Activated T-helper 1 cell treated with anti-CD3 and anti-CD28 coated beads, Interleukin-12 subunit alpha, Interleukin-12 subunit beta, Interleukin-2, Interleukin-4 antibody, amounts not matched to agents 30 ng/mL and 10 ng/mL and 1 ng/mL, durations not matched to agents 14 hours and 24 hours and 36 hours (primary cell): ENCODE measurements at regions of chr20 and their contacts with region 1.

Region 1: GRCh38 chr20:833450-834150 is at the start of gene FAM110A:
- DNase-seq: peak; percentile 95
- H3K4me3 Mint-ChIP-seq: peak within 1 kb of the TSS; percentile 81
- H3K27ac Mint-ChIP-seq: peak within 1 kb of the TSS; percentile 86
- H3K4me1 Mint-ChIP-seq: peaks cover 51% of the 10 kb centered on the region
- H3K27me3 Mint-ChIP-seq: peaks cover 2% of the 10 kb centered on the region
- total RNA-seq, gene FAM110A: 19.0 and 21.1 TPM in 2 replicates

Region 2: DNA sequence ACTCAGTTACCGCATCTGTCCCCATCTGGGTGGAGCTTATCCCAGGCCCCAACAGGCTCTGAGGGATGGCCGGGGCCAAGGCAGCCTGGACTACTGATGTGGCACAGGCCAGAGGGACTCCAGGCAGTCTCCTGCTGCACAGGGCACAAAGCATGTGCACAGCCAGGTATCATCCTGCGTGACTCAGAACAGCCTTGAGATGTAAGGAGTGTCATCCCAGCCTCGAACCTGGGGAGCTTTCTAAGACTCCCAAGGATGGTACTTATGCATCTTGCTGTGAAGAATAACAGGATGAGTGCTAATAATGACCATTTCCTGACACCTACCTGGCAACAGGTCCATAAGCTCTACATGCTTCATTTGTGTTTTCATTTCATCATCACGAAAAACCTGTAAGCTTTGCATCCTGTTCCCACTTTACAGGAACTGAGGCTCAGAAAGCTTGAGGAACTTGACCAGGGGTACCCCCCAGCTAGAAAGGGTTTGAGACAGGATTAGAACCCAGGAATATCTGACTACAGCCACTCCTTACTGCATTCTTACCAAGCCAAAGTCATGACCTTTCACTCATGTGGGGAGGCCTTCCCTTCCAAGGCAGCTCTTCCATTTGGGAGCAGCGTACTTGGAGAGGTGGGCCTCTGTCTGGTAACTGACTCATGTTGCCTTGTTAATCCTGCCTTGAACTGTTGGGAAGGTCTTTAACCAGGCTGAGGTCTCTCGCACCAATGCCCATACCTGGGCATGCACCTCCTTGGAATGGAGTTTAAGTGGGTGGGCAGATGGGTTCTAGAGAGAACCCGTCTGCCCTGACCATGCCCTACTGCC is 451.1 kb before region 1 on chr20:
- intact Hi-C with region 1: no loop called
- DNase-seq: no peak
- H3K4me3 Mint-ChIP-seq: peak overlapping the region; percentile 81
- H3K27ac Mint-ChIP-seq: peak overlapping the region; percentile 68
- H3K4me1 Mint-ChIP-seq: peaks cover 22% of the 10 kb centered on the region
- H3K27me3 Mint-ChIP-seq: peaks cover 3% of the 10 kb centered on the region

Region 3: GRCh38 chr20:462199-462991 is 371.2 kb before region 1 on chr20 and contains the start of gene TBC1D20:
- intact Hi-C with region 1: loop called (anchors 5 kb)
- DNase-seq: peak; percentile 84
- H3K4me3 Mint-ChIP-seq: peak within 1 kb of the TSS; percentile 98
- H3K27ac Mint-ChIP-seq: peak within 1 kb of the TSS; percentile 94
- H3K4me1 Mint-ChIP-seq: peaks cover 44% of the 10 kb centered on the region
- H3K27me3 Mint-ChIP-seq: peaks cover 2% of the 10 kb centered on the region
- total RNA-seq, gene TBC1D20: 37.5 and 41.4 TPM in 2 replicates

Region 4: GRCh38 chr20:653110-653589 is 180.4 kb before region 1 on chr20 and contains the start of gene SRXN1:
- intact Hi-C with region 1: loop called (anchors 2 kb)
- DNase-seq: peak; percentile 80
- H3K4me3 Mint-ChIP-seq: peak within 1 kb of the TSS; percentile 87
- H3K27ac Mint-ChIP-seq: peak within 1 kb of the TSS; percentile 81
- H3K4me1 Mint-ChIP-seq: peaks cover 35% of the 10 kb centered on the region
- H3K27me3 Mint-ChIP-seq: peaks cover 16% of the 10 kb centered on the region
- total RNA-seq, gene SRXN1: 28.8 and 30.2 TPM in 2 replicates

Region 5: DNA sequence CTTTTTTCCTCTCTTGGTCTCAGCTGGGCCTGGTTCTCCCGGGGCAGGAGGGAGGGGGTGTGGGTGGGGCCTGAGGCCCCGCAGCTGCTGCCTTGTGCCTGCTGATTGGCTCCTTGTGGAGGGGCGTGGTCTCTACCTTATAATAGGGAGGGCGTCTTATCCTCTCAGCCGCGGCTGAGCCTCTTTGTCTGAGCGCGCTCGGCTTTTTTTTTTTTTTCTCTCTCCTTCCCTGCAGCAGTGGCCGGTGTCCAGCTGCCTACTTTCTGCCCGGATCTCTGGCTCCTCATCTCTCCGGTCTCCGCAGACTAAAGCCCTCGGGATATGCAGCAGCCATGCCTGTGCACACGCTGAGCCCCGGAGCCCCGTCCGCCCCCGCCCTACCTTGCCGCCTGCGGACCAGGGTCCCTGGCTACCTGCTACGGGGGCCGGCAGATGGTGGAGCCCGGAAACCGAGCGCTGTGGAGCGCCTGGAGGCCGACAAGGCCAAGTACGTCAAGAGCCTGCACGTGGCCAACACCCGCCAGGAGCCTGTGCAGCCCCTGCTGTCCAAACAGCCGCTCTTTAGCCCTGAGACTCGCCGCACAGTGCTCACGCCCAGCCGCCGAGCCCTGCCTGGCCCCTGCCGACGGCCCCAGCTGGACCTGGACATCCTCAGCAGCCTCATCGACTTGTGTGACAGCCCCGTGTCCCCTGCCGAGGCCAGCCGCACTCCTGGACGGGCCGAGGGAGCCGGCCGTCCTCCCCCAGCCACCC is 11.0 kb after region 1 on chr20:
- intact Hi-C with region 1: loop called (anchors 1 kb)
- DNase-seq: peak; percentile 78
- H3K4me3 Mint-ChIP-seq: peak overlapping the region; percentile 86
- H3K27ac Mint-ChIP-seq: peak overlapping the region; percentile 70
- H3K4me1 Mint-ChIP-seq: peaks cover 48% of the 10 kb centered on the region
- H3K27me3 Mint-ChIP-seq: no peaks in the 10 kb centered on the region

Region 6: GRCh38 chr20:1150218-1150617 is 316.6 kb after region 1 on chr20:
- intact Hi-C with region 1: no loop called
- DNase-seq: no peak
- H3K4me3 Mint-ChIP-seq: no peak overlapping the region
- H3K27ac Mint-ChIP-seq: no peak overlapping the region
- H3K4me1 Mint-ChIP-seq: peaks cover 27% of the 10 kb centered on the region
- H3K27me3 Mint-ChIP-seq: no peaks in the 10 kb centered on the region

Region 7: GRCh38 chr20:1225783-1226654 is 392.4 kb after region 1 on chr20 and contains the start of gene RAD21L1:
- intact Hi-C with region 1: loop called (anchors 5 kb)
- DNase-seq: peak; percentile 57
- H3K4me3 Mint-ChIP-seq: peak within 1 kb of the TSS; percentile 84
- H3K27ac Mint-ChIP-seq: no peak within 1 kb of the TSS
- H3K4me1 Mint-ChIP-seq: peaks cover 7% of the 10 kb centered on the region
- H3K27me3 Mint-ChIP-seq: peaks cover 36% of the 10 kb centered on the region
- total RNA-seq, gene RAD21L1: not detected in 2 replicates

Region 8: DNA sequence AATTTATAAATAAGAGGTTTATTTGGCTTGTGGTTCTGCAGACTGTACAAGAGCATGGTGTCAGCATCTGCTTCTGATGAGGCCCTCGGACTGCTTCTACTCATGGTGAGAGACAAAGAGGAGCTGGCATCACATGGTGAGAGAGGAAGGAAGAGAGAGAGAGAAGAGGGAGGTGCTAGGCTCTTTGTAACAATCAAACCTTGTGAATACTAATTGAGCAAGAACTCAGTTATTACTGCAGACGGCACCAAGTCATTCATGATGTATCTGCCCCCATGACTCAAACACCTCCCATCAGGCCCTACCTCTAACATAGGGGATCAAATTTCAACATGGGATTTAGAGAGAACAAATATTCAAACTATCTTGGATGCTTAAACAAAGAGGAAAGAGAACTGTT is 830.3 kb after region 1 on chr20:
- intact Hi-C with region 1: loop called (anchors 10 kb)
- DNase-seq: no peak
- H3K4me3 Mint-ChIP-seq: peak overlapping the region; percentile 55
- H3K27ac Mint-ChIP-seq: peak overlapping the region; percentile 85
- H3K4me1 Mint-ChIP-seq: peaks cover 96% of the 10 kb centered on the region
- H3K27me3 Mint-ChIP-seq: no peaks in the 10 kb centered on the region